CD8-positive, alpha-beta memory T cell (primary cell): ENCODE measurements at regions of chr7 and their contacts with region 1.

Region 1: GRCh38 chr7:138738551-138739335 is 37.6 kb upstream of the SVOPL start:
- DNase-seq: peak; percentile 67 to 85 (median 72)
- H3K4me3 ChIP-seq: no peak overlapping the region
- H3K4me3 Mint-ChIP-seq: no peak overlapping the region
- H3K27ac ChIP-seq: no peak overlapping the region
- H3K27ac Mint-ChIP-seq: peak overlapping the region in 4 of 8 donors; percentile 31 to 70 (median 52)
- H3K4me1 ChIP-seq: no peaks in the 10 kb centered on the region
- H3K4me1 Mint-ChIP-seq: peaks cover 3 to 6% (median 4%) of the 10 kb centered on the region in 3 donors
- H3K27me3 ChIP-seq: no peaks in the 10 kb centered on the region
- H3K27me3 Mint-ChIP-seq: no peaks in the 10 kb centered on the region

Region 2: GRCh38 chr7:138161600-138162081 is 577.1 kb before region 1 on chr7:
- CTCF ChIA-PET with region 1: interaction called, 33 read pairs
- POLR2A ChIA-PET with region 1: interaction called, 4 read pairs
- DNase-seq: peak; percentile 41 to 86 (median 74)
- H3K4me3 ChIP-seq: no peak overlapping the region
- H3K4me3 Mint-ChIP-seq: no peak overlapping the region
- H3K27ac ChIP-seq: no peak overlapping the region
- H3K27ac Mint-ChIP-seq: no peak overlapping the region
- H3K4me1 ChIP-seq: no peaks in the 10 kb centered on the region
- H3K4me1 Mint-ChIP-seq: no peaks in the 10 kb centered on the region
- H3K27me3 ChIP-seq: no peaks in the 10 kb centered on the region
- H3K27me3 Mint-ChIP-seq: peaks cover 0 to 5% of the 10 kb centered on the region in 2 donors

Region 3: GRCh38 chr7:138752568-138753518 is 14.1 kb after region 1 on chr7:
- CTCF ChIA-PET with region 1: interaction called, 26 read pairs
- POLR2A ChIA-PET with region 1: interaction called, 9 read pairs
- DNase-seq: peak; percentile 79 to 98 (median 96)
- H3K4me3 ChIP-seq: peak overlapping the region; percentile 13
- H3K4me3 Mint-ChIP-seq: peak overlapping the region; percentile 17 to 71 (median 48)
- H3K27ac ChIP-seq: peak overlapping the region; percentile 44
- H3K27ac Mint-ChIP-seq: peak overlapping the region; percentile 90 to 99 (median 95)
- H3K4me1 ChIP-seq: peaks cover 24% of the 10 kb centered on the region
- H3K4me1 Mint-ChIP-seq: peaks cover 42 to 68% (median 53%) of the 10 kb centered on the region in 3 donors
- H3K27me3 ChIP-seq: no peaks in the 10 kb centered on the region
- H3K27me3 Mint-ChIP-seq: peaks cover 0 to 4% of the 10 kb centered on the region in 2 donors

Region 4: DNA sequence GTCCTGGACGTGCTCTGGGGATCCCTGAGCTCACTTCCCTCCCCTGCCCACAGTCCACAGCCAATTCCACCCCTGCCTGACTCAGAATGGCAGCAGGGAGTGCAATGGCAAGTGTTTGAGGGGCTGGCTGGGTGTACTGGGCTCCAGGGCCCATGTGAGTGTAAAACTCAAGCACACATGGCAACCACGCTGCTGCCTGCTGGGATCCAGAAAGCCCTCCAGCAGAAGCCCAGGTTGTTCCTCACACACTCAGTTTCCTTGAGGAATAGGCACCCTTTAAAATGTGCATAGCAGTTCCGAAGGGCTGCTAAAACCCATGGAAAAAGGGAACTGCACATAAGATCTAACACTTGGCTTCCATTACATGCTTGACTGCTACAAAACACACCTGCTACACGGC is 70.6 kb after region 1 on chr7:
- CTCF ChIA-PET with region 1: no interaction called
- POLR2A ChIA-PET with region 1: no interaction called
- DNase-seq: no peak
- H3K4me3 ChIP-seq: no peak overlapping the region
- H3K4me3 Mint-ChIP-seq: no peak overlapping the region
- H3K27ac ChIP-seq: no peak overlapping the region
- H3K27ac Mint-ChIP-seq: no peak overlapping the region
- H3K4me1 ChIP-seq: no peaks in the 10 kb centered on the region
- H3K4me1 Mint-ChIP-seq: no peaks in the 10 kb centered on the region
- H3K27me3 ChIP-seq: peaks cover 2% of the 10 kb centered on the region
- H3K27me3 Mint-ChIP-seq: peaks cover 2% of the 10 kb centered on the region in 2 donors